ENCODE measurements at regions of chr5 and their contacts with region 1.

Region 1: DNA sequence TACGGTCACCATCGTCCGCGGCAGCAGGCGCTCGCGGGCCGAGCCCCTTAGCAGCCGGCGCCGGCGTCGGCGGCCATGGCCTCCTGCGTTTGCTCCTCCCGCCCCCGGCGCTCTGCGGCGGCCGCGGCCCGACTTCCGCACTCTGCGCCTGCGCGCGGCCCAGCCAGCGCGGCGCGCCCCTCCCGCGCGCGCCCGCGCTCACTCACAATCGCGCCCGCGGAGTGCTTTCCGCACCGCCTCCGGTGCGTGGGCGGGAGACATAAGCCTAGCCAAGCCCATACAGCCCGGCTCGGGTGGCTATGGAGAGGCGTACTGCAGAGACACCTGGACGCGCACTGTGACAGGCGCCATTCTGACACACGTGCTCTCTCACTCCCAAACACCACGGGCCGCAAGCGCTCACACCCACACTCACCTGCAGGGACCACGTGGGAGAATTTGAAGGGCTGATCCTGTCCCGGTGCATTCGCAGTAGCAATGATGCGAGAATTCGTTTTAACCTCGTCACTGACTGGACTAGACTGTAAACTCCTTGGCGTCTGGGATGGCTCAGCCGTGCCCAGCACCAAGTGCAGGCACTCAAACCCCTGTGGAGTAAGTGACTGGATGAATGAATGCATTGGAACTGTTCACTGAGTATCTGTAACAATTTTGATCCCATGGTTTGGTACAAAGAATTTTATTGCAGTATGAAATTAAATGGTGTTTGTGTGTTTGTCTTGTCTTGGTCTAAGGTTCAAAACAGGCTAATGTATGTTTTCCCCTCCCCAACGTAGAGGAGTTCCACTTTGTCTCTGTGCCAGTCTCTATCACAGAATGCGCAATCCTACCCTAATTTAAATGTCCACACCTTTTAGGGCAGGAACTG is at the start of gene RNF145:
- DNase-seq: peak; percentile 96
- ATAC-seq: peak; percentile 65
- H3K4me3 Mint-ChIP-seq: peak within 1 kb of the TSS; percentile 100
- H3K27ac Mint-ChIP-seq: peak within 1 kb of the TSS; percentile 100
- H3K4me1 Mint-ChIP-seq: peaks cover 38% of the 10 kb centered on the region
- H3K27me3 Mint-ChIP-seq: no peaks in the 10 kb centered on the region
- total RNA-seq, gene RNF145: 81.9 to 87.5 TPM

Region 2: DNA sequence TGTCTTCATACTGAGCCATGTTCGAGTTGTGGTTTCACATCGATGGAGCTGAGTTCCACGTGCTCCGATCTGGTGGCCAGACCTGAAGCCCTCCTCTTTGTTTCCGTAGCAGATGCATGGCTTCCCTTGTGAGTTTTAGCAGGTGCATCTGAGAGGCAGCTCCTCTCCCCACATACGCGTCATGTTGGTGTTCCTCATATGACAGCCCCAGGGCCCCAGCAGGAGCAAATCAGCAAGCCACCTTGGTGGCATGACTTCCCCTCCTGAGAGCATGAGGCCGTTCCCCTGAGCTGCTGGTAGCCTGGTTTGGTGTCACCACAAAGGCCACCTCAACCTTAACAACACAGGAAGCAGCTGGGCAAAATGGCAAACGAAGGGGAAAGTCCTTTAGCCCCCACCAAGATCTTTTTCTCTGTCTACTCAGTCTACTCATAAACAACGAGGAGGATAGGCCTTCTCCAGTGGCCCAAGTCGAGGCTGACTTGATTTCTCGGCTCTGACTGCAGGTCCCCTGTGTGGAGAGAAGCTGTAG is 1937.9 kb before region 1 on chr5:
- CTCF ChIA-PET with region 1: no interaction called
- POLR2A ChIA-PET with region 1: no interaction called
- intact Hi-C with region 1: loop called in 1 of 2 experiments (anchors 5 kb)
- DNase-seq: peak; percentile 95
- ATAC-seq: peak; percentile 82
- H3K4me3 Mint-ChIP-seq: peak overlapping the region; percentile 96
- H3K27ac Mint-ChIP-seq: peak overlapping the region; percentile 97
- H3K4me1 Mint-ChIP-seq: peaks cover 84% of the 10 kb centered on the region
- H3K27me3 Mint-ChIP-seq: no peaks in the 10 kb centered on the region

Region 3: DNA sequence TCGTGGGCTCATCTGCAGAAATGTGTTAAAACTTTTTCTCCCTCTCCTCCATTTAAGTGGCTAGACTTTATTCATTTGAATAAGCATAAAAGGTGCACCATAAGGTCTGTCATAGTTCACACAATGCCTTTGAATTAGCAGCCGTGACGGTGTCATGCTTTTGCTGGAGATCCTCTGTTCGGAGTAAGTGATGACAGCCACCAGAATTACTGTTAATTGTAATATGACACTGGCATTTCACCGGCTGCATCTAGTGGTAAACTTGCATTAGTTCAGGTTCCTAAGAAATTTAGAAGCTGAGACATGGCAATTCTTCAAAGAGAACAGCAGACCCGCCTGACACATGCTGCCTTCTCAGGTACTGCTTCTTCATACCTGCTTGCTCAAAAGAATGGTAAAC is 351.7 kb before region 1 on chr5:
- CTCF ChIA-PET with region 1: no interaction called
- POLR2A ChIA-PET with region 1: no interaction called
- intact Hi-C with region 1: no loop called
- DNase-seq: peak; percentile 8
- ATAC-seq: peak; percentile 36
- H3K4me3 Mint-ChIP-seq: no peak overlapping the region
- H3K27ac Mint-ChIP-seq: no peak overlapping the region
- H3K4me1 Mint-ChIP-seq: peaks cover 34% of the 10 kb centered on the region
- H3K27me3 Mint-ChIP-seq: peaks cover 3% of the 10 kb centered on the region

Region 4: DNA sequence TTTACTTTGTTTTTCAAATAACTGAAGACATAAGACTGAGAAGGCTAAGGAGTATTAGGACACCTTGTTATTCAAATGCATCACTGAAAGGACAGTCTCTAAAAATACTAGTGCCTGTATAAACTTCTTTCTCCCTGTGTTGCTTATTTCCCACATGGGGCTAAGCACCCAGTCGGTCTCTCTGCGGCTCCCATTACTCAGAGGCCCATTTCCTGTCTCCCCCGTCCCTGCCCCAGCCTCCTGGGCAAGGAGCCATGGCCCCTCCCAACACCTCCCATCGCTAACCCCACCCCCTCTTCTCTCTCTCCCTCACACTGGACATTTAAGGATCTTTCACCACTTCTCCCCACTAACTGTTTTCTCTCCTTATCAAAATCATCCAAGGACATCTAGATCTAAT is 191.9 kb before region 1 on chr5:
- CTCF ChIA-PET with region 1: no interaction called
- POLR2A ChIA-PET with region 1: no interaction called
- intact Hi-C with region 1: no loop called
- DNase-seq: peak; percentile 20
- ATAC-seq: no peak
- H3K4me3 Mint-ChIP-seq: no peak overlapping the region
- H3K27ac Mint-ChIP-seq: no peak overlapping the region
- H3K4me1 Mint-ChIP-seq: peaks cover 3% of the 10 kb centered on the region
- H3K27me3 Mint-ChIP-seq: no peaks in the 10 kb centered on the region

Region 5: DNA sequence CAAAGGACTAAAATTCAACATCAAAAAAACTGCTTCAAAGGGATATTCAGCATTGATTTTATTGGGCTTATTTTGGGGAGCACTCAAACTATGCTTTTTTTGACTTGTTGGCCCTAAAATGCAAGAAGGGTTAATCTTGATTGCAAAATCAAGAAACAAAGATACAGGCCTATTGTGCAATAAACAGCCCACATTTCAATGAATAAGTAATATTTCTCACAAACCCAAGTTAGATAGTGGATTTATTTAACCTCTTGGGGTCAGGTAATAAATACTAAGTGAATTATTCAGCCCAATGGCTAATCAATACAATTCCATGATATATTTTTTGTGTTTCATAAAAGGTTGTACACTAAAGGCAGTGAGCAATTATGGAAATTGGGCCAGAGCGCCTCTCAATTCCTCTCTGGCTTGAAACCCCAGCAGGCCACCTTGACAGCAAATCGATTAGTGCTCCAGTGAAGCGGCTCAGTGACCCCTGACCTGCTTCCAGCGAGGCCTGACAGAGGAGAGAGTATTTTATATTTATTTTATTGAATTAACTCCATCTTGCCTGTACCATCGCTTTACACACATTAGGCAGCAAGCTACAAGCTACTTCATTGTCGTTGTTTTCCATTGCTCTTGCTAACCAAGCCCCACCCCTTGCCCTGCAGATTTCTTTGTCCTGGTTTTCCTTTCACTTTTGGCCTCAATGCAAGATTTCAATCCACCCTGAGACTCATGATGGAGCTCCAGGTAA is 175.4 kb before region 1 on chr5:
- CTCF ChIA-PET with region 1: no interaction called
- POLR2A ChIA-PET with region 1: no interaction called
- intact Hi-C with region 1: no loop called
- DNase-seq: no peak
- ATAC-seq: no peak
- H3K4me3 Mint-ChIP-seq: no peak overlapping the region
- H3K27ac Mint-ChIP-seq: no peak overlapping the region
- H3K4me1 Mint-ChIP-seq: peaks cover 11% of the 10 kb centered on the region
- H3K27me3 Mint-ChIP-seq: peaks cover 20% of the 10 kb centered on the region

Region 6: DNA sequence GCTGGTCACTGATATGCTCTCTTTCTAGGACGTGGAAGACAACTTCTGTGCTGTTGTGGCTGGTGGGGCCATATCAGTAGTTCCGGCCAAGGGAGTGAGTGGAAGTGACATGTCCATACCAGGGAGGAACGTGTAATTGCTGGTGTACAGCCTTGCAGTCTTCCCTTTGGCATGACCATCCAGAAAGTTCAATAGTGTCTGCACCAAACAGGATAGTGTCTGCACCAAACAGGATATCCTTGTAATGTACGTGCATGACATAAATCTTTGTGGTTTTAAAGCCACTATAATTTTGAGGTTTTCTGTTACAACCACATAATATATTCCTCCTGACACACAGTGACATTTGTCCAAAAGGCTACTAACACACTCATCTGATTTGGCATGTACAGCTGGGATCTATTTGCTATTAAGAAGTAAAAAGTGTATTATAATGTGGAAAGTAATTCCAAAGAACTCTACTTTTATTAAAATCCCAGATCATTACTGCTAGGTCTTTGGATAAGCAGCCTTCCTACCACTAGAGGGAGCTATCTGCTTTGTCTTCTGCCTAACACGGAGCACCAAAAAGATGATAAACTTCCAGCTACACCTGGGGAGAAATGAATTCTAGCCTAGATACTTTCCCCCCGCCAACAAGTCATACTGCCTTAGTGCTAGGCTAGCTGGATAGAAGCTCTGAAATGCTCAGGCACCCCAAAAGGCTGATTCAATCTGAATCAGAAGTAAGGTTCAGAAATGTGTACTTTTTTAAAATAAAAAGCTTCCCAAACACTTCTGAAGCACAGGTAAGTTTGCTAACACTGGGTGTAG is 53.0 kb before region 1 on chr5:
- CTCF ChIA-PET with region 1: interaction called, 15 read pairs
- POLR2A ChIA-PET with region 1: interaction called, 5 read pairs
- intact Hi-C with region 1: no loop called
- DNase-seq: peak; percentile 21
- ATAC-seq: peak; percentile 79
- H3K4me3 Mint-ChIP-seq: no peak overlapping the region
- H3K27ac Mint-ChIP-seq: no peak overlapping the region
- H3K4me1 Mint-ChIP-seq: peaks cover 40% of the 10 kb centered on the region
- H3K27me3 Mint-ChIP-seq: no peaks in the 10 kb centered on the region

Region 7: DNA sequence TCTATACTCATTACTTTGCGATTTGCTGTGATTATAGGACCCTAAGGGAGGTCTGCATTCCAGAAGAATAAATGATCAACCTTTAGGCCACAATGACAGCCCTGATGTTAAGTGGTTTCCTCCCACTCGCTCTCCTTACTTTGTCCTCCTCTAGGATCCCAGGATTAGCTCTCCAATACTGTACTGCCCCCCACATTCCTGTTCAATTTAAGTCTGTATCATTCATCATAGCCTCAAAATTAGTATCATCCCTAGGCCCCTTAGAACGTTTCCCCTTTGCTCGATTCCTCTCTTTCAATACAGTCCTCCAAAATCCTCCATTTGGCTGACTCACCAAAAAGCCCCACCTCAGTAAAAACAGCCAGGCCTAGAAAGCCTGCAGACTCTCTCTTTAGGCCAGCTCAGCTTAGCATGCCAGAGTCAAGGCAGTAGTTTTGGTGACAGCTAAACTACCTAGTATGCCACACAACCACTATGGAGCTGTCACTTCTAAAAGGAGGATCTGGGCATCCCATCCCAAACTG is 24.8 kb before region 1 on chr5:
- CTCF ChIA-PET with region 1: interaction called, 11 read pairs
- POLR2A ChIA-PET with region 1: no interaction called
- intact Hi-C with region 1: loop called in 1 of 2 experiments (anchors 2 kb)
- DNase-seq: peak; percentile 70
- ATAC-seq: peak; percentile 94
- H3K4me3 Mint-ChIP-seq: peak overlapping the region; percentile 1
- H3K27ac Mint-ChIP-seq: peak overlapping the region; percentile 83
- H3K4me1 Mint-ChIP-seq: peaks cover 74% of the 10 kb centered on the region
- H3K27me3 Mint-ChIP-seq: no peaks in the 10 kb centered on the region

Region 8: DNA sequence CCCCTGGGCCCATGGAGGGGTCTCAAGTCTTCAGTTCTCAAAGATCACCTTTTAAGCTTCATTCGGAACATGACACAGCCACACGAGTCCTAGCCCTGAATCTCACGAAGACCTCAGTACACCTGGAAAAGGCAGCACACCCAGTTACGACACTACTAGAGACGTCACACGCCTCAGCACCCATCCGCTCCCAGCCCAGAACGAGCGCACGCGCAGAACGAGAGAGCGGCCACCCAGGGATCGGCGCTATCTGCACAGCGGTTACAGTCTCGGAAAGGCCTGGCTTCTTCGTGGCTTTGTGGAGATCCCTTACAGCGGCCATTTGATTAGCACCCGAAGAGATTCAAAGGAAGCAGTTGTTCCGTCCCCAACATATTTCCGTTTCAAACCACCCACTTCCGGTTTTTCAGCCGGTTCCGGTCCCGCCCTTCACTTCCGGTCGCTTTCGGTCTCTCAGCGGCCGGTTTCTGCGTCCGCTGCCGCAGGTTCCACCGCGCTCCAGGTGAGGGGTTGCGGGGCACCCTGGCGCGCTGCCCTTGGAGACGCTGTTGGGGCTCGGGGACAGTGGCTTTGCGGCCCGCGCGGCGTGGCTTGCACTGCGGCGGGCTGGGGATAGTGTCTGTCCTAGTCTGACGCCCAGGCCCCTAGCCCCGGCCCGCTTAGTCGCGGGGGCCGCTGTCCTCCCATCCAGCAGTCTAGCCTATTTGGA is 53.3 kb after region 1 on chr5 and contains the start of gene UBLCP1:
- CTCF ChIA-PET with region 1: interaction called, 8 read pairs
- POLR2A ChIA-PET with region 1: interaction called, 3 read pairs
- intact Hi-C with region 1: loop called (anchors 1 kb)
- DNase-seq: peak; percentile 85
- ATAC-seq: peak; percentile 92
- H3K4me3 Mint-ChIP-seq: peak within 1 kb of the TSS; percentile 89
- H3K27ac Mint-ChIP-seq: peak within 1 kb of the TSS; percentile 100
- H3K4me1 Mint-ChIP-seq: peaks cover 49% of the 10 kb centered on the region
- H3K27me3 Mint-ChIP-seq: no peaks in the 10 kb centered on the region
- total RNA-seq, gene UBLCP1: 26.0 to 31.0 TPM

Region 9: DNA sequence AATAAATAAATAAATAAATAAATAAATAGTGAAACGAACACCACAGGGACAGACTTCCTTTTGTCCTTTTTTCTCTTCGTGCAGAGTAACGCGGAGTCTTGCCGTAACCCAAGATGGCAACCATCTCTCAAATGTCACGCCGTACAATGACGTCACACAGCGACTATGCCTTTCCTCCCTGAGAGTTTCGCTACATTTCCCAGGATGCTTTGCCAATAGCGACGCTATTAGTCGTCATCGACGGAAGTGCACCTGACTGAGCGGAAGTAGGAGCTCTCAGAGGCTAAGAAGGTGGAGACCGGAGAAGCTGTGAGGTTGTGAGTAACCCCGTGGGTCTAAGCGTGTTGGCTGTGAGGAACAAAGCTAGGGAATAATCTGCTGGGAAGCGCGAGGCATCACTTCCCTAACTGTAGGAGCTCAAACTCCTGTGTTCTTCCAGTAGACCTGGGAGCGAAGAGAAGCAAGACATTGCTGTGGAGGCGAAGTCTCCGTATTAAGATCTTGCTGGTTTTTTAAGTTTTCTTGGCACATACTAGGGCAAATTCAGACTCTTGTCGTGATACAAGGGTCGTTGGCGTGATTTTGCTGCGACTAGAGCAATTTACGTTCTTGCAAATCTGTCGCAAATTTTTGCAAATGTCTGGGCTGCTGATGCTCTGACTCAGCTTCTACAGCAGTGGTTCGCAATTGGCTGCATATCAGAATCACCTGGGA is 799.4 kb after region 1 on chr5 and contains the start of gene TTC1:
- CTCF ChIA-PET with region 1: no interaction called
- POLR2A ChIA-PET with region 1: interaction called, 3 read pairs
- intact Hi-C with region 1: loop called (anchors 2 to 10 kb)
- DNase-seq: peak; percentile 95
- ATAC-seq: peak; percentile 98
- H3K4me3 Mint-ChIP-seq: peak within 1 kb of the TSS; percentile 92
- H3K27ac Mint-ChIP-seq: peak within 1 kb of the TSS; percentile 96
- H3K4me1 Mint-ChIP-seq: peaks cover 26% of the 10 kb centered on the region
- H3K27me3 Mint-ChIP-seq: no peaks in the 10 kb centered on the region
- total RNA-seq, gene TTC1: 60.6 to 63.1 TPM

Region 10: GRCh38 chr5:160467555-160468362 is 1258.1 kb after region 1 on chr5:
- CTCF ChIA-PET with region 1: no interaction called
- POLR2A ChIA-PET with region 1: no interaction called
- intact Hi-C with region 1: loop called in 1 of 2 experiments (anchors 5 kb)
- DNase-seq: peak; percentile 89
- ATAC-seq: peak; percentile 85
- H3K4me3 Mint-ChIP-seq: peak overlapping the region; percentile 88
- H3K27ac Mint-ChIP-seq: peak overlapping the region; percentile 99
- H3K4me1 Mint-ChIP-seq: peaks cover 76% of the 10 kb centered on the region
- H3K27me3 Mint-ChIP-seq: no peaks in the 10 kb centered on the region

Measured in activated CD4-positive, alpha-beta T cell treated with anti-CD3 and anti-CD28 coated beads for 36 hours (primary cell).